GM12878 (cell line): ENCODE measurements at regions of chr11 and their contacts with region 1.

Region 1: GRCh38 chr11:108222686-108223448 is at the start of gene ATM:
- DNase-seq: peak; percentile 99
- ATAC-seq: peak; percentile 88
- H3K4me3 ChIP-seq: peak within 1 kb of the TSS; percentile 97
- H3K27ac ChIP-seq: peak within 1 kb of the TSS; percentile 99
- H3K4me1 ChIP-seq: peaks cover 19% of the 10 kb centered on the region
- H3K27me3 ChIP-seq: no peaks in the 10 kb centered on the region
- CTCF ChIP-seq: peak; percentile 85 to 96 (median 88)
- EP300 ChIP-seq: peak in 1 of 2 experiments; percentile 50; a peak in 2 of 4 replicates
- POLR2A ChIP-seq: peak; percentile 74
- RAD21 ChIP-seq: peak; percentile 81
- polyA plus RNA-seq, gene ATM: 10.0 to 10.5 TPM

Region 2: DNA sequence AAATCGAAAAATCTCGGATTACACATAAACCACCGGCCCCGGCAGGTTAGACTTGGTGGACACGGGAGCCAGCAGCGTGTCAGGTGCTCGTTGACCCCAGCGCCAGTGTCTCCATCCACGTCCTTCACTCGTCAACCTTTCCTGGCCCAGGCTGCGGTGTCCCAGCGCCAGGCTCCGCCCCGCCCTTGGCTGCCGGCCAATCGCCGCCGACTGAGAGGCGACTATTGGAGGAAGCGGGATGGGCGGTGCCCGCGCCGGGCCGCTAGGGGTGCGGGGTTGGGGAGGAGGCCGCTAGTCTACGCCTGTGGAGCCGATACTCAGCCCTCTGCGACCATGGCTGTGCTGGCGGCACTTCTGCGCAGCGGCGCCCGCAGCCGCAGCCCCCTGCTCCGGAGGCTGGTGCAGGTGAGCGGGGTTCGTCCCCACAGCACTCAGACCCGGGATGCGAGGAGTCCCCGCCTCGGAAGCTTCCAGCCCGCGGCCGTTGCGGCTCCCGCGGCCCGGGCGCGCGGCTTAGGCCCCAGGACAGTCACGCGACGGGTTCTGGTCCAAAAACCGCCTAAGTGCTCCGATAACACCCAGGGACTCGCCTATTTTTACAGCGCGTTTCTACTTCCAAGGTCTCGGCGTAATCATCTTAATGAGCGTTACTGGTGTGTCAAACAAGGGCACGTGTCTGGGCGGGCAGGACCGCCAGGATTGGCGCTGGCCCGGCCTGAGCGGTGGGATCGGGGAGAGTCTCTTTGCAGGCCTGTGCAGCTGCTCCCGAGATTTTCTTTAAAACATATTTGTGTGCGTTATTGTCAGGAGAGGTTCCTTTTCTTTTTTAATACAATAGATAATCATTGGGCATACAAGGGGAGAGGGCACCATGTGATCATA is 101.4 kb before region 1 on chr11 and contains the start of gene ACAT1:
- CTCF ChIA-PET with region 1: interaction called, 31 read pairs
- POLR2A ChIA-PET with region 1: interaction called, 4 read pairs
- RAD21 ChIA-PET with region 1: interaction called, 27 read pairs
- SMC1A ChIA-PET with region 1: interaction called, 9 read pairs
- in situ Hi-C with region 1: no loop called
- intact Hi-C with region 1: loop called (anchors 2 kb)
- DNase-seq: peak; percentile 71
- ATAC-seq: peak; percentile 98
- H3K4me3 ChIP-seq: peak within 1 kb of the TSS; percentile 73
- H3K27ac ChIP-seq: peak within 1 kb of the TSS; percentile 65
- H3K4me1 ChIP-seq: peaks cover 10% of the 10 kb centered on the region
- H3K27me3 ChIP-seq: no peaks in the 10 kb centered on the region
- CTCF ChIP-seq: peak; percentile 7 to 39 (median 10); a peak in 1 of 6 replicates
- EP300 ChIP-seq: no peak
- POLR2A ChIP-seq: peak; percentile 98
- RAD21 ChIP-seq: no peak
- polyA plus RNA-seq, gene ACAT1: 58.2 to 93.5 TPM

Region 3: DNA sequence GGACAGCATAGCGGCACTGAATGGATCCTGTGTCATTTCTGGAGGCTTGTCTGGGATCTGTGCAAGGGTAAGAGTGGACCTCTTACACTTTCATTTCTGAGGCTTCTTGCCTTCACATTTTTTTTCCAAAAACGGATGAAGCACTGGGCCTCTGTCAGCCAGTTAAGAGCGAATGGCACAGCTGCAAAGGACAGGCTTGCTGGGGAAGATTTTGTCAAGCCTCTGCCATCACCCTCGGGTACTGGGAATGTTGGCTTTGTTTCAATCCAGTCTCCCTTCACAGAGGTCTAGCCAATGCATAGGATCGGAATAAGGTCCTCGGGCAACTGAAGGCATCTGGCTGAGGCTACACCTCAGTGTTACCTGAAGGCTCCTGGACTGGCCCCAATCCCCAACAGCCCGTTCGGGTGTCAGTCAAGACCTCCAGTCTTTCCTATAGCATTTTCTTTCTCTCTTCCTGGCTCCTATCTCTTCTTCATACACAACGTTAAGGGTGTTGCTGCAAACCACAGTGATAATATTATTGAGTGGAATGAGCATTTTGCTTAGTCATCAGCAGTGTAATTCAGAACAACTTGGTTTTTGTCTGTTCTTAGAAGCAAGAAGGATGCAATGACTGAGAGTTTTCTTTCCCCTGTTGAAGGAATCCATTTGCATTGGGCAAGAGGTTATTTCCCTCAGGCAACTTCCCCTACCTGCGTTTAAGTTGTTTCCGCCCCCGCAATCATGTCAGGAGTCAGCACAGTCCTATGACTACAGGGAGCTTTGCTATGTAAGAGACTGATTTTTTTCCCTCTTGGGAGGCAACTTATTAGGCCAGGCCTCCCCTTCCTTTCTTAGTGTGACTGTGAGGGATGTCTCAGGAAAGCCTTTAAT is 23.2 kb before region 1 on chr11:
- CTCF ChIA-PET with region 1: interaction called, 4 read pairs
- POLR2A ChIA-PET with region 1: interaction called, 3 read pairs
- RAD21 ChIA-PET with region 1: interaction called, 7 read pairs
- SMC1A ChIA-PET with region 1: interaction called, 14 read pairs
- in situ Hi-C with region 1: no loop called
- intact Hi-C with region 1: no loop called
- DNase-seq: peak; percentile 68
- ATAC-seq: peak; percentile 86
- H3K4me3 ChIP-seq: no peak overlapping the region
- H3K27ac ChIP-seq: peak overlapping the region; percentile 28
- H3K4me1 ChIP-seq: peaks cover 35% of the 10 kb centered on the region
- H3K27me3 ChIP-seq: no peaks in the 10 kb centered on the region
- CTCF ChIP-seq: no peak
- EP300 ChIP-seq: no peak
- POLR2A ChIP-seq: no peak
- RAD21 ChIP-seq: no peak

Region 4: DNA sequence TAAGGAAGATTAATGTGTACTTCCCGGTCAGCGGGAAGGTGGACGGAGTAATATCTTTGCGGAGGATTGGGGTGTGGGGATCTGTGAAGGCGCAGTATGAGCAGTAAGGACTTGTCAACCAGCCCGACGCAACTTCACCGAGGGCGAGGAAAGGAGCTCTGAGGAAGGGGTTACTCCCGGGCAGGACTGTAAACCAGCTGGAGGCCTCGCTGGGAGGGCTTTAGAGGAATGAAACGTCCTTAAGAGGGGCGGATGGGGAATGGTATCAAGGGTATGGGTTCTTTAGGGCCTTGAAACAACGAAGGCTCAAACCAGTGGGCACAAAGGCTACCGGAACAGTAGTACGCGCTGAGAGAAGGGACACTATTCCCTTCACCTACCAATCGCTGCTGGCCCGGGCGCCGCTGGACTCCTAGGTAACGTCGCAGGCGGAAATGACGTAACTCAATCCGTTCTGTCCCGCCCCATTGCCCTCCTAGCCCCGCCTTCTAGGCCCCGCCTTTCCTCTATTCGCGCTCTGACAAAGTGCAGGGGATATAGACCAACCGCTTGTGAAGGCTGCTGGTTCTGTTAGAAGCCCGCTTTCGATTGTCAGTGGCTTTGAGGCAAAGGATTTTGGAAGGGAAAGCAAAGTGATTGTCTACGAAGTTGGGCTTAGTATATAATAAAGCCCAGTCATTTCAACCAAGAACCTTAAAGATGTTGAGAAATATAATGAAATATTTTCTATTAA is 244.4 kb after region 1 on chr11 and contains the start of gene C11orf65:
- CTCF ChIA-PET with region 1: no interaction called
- POLR2A ChIA-PET with region 1: no interaction called
- RAD21 ChIA-PET with region 1: no interaction called
- SMC1A ChIA-PET with region 1: no interaction called
- in situ Hi-C with region 1: no loop called
- intact Hi-C with region 1: loop called (anchors 10 kb)
- DNase-seq: peak; percentile 96
- ATAC-seq: peak; percentile 99
- H3K4me3 ChIP-seq: peak within 1 kb of the TSS; percentile 74
- H3K27ac ChIP-seq: peak within 1 kb of the TSS; percentile 93
- H3K4me1 ChIP-seq: no peaks in the 10 kb centered on the region
- H3K27me3 ChIP-seq: no peaks in the 10 kb centered on the region
- CTCF ChIP-seq: no peak
- EP300 ChIP-seq: 0 out of 4 replicates have a peak, but pooled peaks of 1 of the 2 experiments have one; percentile 4
- POLR2A ChIP-seq: peak; percentile 95
- RAD21 ChIP-seq: no peak
- polyA plus RNA-seq, gene C11orf65: 1.4 to 1.5 TPM

Region 5: GRCh38 chr11:108664730-108665525 is 442.1 kb after region 1 on chr11 and contains the start of gene DDX10:
- CTCF ChIA-PET with region 1: no interaction called
- POLR2A ChIA-PET with region 1: interaction called, 4 read pairs
- RAD21 ChIA-PET with region 1: interaction called, 3 read pairs
- SMC1A ChIA-PET with region 1: interaction called, 3 read pairs
- in situ Hi-C with region 1: no loop called
- intact Hi-C with region 1: loop called (anchors 5 kb)
- DNase-seq: peak; percentile 92
- ATAC-seq: peak; percentile 84
- H3K4me3 ChIP-seq: peak within 1 kb of the TSS; percentile 94
- H3K27ac ChIP-seq: peak within 1 kb of the TSS; percentile 79
- H3K4me1 ChIP-seq: peaks cover 30% of the 10 kb centered on the region
- H3K27me3 ChIP-seq: no peaks in the 10 kb centered on the region
- CTCF ChIP-seq: no peak; a peak in 1 of 6 replicates
- EP300 ChIP-seq: no peak; a peak in 1 of 4 replicates
- POLR2A ChIP-seq: peak; percentile 75
- RAD21 ChIP-seq: no peak
- polyA plus RNA-seq, gene DDX10: 20.9 to 31.5 TPM